ENCODE measurements at regions of chr14 and their contacts with region 1.

Region 1: DNA sequence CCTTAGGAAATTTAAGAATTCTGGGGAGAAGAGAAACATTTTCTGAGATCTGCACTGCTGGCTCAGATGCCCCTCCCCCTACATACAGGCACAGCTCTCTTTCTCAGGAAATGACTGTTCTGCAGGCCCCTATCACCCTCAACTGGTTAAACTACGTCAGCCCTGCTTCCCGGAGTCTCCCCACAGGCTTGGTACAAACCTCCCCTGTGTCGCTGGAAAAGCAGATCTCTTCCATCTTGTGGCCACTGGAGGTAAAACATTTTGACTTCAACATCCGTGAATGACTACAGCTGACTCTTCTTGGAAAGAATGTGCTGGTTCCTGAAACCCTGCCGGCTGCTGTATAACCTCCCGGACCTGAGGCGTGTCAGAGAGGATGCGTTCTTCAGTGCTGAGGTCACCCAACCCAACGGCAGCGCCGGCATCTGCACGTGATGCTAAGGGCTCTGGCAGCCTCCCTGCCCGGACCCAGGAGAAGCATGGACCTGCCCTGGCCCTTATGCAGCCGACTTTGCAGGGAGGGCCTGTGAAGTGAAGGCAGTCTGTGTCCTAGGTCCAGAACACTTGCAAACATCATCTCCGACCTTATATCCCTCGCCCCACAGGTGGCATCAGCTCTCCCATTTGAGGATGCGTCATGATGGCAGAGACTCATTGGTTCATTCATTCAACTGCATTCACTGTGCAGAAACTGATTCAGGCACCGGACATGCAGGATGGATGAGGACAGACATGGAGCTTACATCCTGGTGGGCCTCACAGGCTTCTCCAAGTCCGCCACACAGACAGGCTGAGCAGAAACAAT is 129.3 kb downstream of the GCH1 start:
- H3K4me3 Mint-ChIP-seq: peak overlapping the region; percentile 57
- H3K27ac Mint-ChIP-seq: peak overlapping the region; percentile 79
- H3K4me1 Mint-ChIP-seq: peaks cover 50% of the 10 kb centered on the region
- H3K27me3 Mint-ChIP-seq: peaks cover 35% of the 10 kb centered on the region

Region 2: GRCh38 chr14:54691525-54692283 is 81.7 kb before region 1 on chr14:
- intact Hi-C with region 1: loop called (anchors 5 kb)
- H3K4me3 Mint-ChIP-seq: no peak overlapping the region
- H3K27ac Mint-ChIP-seq: no peak overlapping the region
- H3K4me1 Mint-ChIP-seq: peaks cover 14% of the 10 kb centered on the region
- H3K27me3 Mint-ChIP-seq: peaks cover 13% of the 10 kb centered on the region

Region 3: DNA sequence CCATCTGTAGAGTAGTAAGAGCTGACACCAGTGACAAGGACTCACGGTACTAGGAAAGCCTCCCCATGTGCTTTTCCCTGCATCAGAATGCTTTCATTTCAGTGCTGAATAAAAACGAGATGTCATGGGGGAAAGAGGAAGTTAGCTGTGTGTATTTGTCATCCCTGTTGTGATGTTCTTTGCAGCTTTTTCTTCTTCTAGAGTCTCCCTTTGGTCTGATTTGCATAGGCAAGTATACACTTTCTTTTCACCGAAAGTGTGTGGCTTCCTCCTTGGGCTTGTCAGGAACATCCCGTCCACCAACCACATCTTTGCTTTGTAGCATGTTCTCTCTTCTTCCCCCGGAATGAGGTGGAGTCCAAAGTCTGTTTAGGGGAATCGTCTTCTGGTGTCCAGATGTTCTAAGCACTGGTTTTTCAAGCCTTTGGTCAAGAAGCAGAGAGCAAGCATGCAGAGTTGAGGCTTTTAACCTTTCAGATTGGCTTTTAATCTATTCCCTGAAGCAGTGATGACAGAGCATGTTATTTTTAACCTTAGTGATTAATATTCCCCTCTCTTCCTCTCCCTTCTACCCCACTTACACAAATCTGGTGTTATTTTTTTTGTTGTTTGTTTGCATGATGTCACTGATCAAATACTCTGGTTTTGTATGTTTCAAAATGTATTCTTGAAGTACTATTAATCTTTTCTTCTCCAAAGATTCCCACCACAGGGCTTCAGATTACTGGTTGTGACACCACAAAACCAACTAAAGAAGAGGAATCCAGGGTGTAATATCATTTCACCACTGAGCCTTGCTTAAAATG is 43.0 kb before region 1 on chr14:
- intact Hi-C with region 1: loop called (anchors 2 kb)
- H3K4me3 Mint-ChIP-seq: peak overlapping the region; percentile 59
- H3K27ac Mint-ChIP-seq: peak overlapping the region; percentile 87
- H3K4me1 Mint-ChIP-seq: peaks cover 9% of the 10 kb centered on the region
- H3K27me3 Mint-ChIP-seq: no peaks in the 10 kb centered on the region